Naive thymus-derived CD8-positive, alpha-beta T cell (primary cell): ENCODE measurements at regions of chr11 and their contacts with region 1.

Region 1: DNA sequence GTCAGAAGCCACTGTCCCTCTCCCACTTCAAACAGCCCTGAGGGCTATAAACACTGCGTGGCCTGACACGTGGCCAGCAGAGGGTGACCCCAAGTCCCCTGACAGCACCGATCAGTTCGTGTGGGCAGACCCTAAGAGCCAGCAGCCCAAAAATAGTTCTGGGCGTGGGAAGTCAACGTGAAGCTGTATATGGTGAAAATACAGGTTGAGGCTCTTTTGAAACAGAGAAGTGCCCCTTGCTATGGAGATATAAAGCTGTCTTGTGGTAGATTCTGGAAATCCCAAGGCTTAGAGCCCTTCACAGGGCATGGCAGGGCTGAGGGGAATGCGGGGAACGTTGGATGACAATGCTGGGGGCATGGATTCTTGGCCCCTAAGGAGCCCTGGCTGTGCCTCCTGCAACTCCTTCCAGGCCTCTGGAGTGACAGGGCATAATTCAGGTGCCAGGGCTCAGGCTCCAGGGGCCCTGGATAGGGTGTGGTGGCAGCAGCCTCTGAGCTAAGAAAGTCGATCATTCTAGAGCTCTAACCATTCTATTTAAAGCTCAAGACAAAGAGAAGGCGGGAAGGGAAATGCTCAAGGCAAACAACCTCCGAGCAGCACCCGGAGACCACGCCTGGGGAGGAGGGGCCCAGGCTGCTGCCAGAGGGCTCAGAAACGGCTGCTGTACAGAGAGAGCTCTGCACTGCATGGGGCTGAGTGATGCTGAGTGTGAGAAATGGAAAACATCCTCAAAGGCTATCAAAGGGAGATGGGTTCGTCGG is 60.4 kb upstream of the CD5 start:
- DNase-seq: peak; percentile 72 to 95 (median 86)
- ATAC-seq: peak; percentile 98 to 99
- H3K4me3 Mint-ChIP-seq: peak overlapping the region; percentile 67 to 87 (median 78)
- H3K27ac Mint-ChIP-seq: peak overlapping the region; percentile 95 to 99 (median 98)
- H3K4me1 Mint-ChIP-seq: peaks cover 25 to 55% (median 47%) of the 10 kb centered on the region in 4 donors
- H3K27me3 Mint-ChIP-seq: no peaks in the 10 kb centered on the region

Region 2: DNA sequence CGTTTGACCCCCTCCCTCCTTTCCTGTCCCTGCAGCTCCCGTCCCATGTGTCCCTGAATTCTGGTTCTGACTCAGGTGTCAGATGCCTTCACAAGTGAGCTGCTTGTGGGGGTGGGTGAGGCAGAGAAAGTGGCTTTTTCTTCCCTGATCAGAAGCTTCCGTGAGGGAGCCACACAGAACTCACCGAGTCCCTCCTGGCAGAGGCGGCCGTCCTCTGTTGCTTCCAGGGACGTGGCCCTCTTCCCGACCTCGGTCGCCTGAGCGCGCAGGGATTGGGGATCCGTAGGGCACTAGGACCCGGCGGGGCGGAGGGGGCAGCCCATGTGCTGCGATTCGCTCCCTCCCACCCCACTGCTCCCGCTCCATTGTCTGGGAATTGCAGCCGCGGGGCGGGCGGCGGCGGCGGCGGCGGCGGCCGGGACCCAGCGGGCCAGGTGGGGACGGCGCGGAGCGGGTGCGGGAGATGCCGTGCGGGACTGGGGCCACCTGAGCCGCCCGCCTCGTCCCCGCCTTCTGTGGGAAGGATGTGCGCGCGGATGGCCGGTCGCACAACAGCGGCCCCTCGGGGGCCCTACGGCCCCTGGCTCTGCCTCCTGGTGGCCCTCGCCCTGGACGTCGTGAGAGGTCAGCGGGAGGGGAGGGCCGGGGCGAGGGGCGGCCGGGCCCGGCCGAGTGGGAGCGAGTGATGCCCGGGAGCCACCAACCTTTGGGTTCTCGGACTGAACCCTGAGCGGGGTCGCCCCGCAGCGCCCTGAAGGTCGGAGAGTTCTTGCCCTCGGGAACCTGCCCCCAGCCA is 117.6 kb before region 1 on chr11 and contains the start of gene TMEM132A:
- POLR2A ChIA-PET with region 1: no interaction called
- DNase-seq: peak in 3 of 10 donors; percentile 8 to 24 (median 22)
- ATAC-seq: peak; percentile 43 to 71
- H3K4me3 Mint-ChIP-seq: peak within 1 kb of the TSS; percentile 59 to 81 (median 72)
- H3K27ac Mint-ChIP-seq: peak within 1 kb of the TSS in 3 of 10 donors; percentile 25 to 29 (median 27)
- H3K4me1 Mint-ChIP-seq: peaks cover 13 to 20% (median 17%) of the 10 kb centered on the region in 4 donors
- H3K27me3 Mint-ChIP-seq: peaks cover 0 to 20% (median 9%) of the 10 kb centered on the region in 5 donors
- polyA plus RNA-seq, gene TMEM132A: not detected

Region 3: GRCh38 chr11:60978546-60979380 is 63.2 kb before region 1 on chr11:
- POLR2A ChIA-PET with region 1: interaction called, 18 read pairs
- DNase-seq: peak in 1 of 10 donors; percentile 40
- ATAC-seq: peak; percentile 39 to 45
- H3K4me3 Mint-ChIP-seq: peak overlapping the region; percentile 57 to 95 (median 81)
- H3K27ac Mint-ChIP-seq: peak overlapping the region; percentile 81 to 99 (median 94)
- H3K4me1 Mint-ChIP-seq: peaks cover 36 to 93% (median 89%) of the 10 kb centered on the region in 4 donors
- H3K27me3 Mint-ChIP-seq: no peaks in the 10 kb centered on the region

Region 4: DNA sequence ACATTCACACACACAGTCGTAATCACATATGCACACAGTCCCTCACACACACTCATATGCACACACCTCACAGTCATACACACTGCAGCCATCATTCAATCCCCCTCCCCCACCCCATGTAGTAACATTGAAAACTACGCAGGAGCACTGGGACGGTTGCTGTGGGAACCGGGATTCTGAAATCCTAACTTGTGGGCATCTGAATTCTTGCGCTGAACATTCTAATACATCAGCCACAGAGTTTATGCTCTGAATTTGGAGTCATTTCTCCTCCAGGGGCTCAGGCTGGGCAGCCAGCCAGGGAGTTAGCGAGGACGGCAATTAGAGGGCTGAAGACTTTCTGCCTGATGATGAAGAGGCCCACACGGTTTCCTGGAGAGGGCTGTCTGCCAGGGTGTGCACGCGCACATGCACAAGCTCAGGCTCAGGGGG is 37.7 kb before region 1 on chr11:
- POLR2A ChIA-PET with region 1: interaction called, 13 read pairs
- DNase-seq: peak in 7 of 10 donors; percentile 35 to 74 (median 47)
- ATAC-seq: peak; percentile 64 to 71
- H3K4me3 Mint-ChIP-seq: peak overlapping the region; percentile 60 to 88 (median 78)
- H3K27ac Mint-ChIP-seq: peak overlapping the region; percentile 88 to 98 (median 95)
- H3K4me1 Mint-ChIP-seq: peaks cover 44 to 88% (median 80%) of the 10 kb centered on the region in 4 donors
- H3K27me3 Mint-ChIP-seq: no peaks in the 10 kb centered on the region

Region 5: DNA sequence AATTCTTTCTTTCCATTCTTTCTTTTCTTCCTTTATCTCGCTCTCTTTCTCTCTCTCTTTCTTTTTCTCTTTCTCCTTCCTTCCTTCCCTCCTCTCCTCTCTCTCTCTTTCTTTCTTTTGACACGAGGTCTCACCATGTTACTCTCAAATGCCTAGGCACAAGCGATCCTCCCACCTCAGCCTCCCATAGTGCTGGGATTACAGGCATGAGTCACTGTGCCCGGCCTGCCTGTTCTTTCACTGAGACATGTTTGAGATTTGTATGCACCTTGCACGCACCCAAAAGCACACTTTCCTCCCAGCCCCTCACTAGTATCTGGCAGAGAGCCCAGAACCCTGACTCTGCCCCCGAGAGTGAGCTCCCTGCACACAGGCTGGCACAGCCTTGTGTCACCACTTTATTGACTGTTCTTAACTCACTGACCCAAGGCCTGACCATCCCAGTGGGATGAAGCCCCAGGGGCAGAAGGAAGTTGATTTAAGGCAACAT is 13.6 kb before region 1 on chr11:
- POLR2A ChIA-PET with region 1: interaction called, 122 read pairs
- DNase-seq: peak; percentile 44 to 84 (median 57)
- ATAC-seq: peak; percentile 7 to 31
- H3K4me3 Mint-ChIP-seq: peak overlapping the region; percentile 78 to 98 (median 86)
- H3K27ac Mint-ChIP-seq: peak overlapping the region; percentile 95 to 99 (median 98)
- H3K4me1 Mint-ChIP-seq: peaks cover 41 to 90% (median 80%) of the 10 kb centered on the region in 4 donors
- H3K27me3 Mint-ChIP-seq: no peaks in the 10 kb centered on the region

Region 6: GRCh38 chr11:61061081-61061826 is 19.3 kb after region 1 on chr11:
- POLR2A ChIA-PET with region 1: interaction called, 69 read pairs
- DNase-seq: peak in 9 of 10 donors; percentile 32 to 74 (median 47)
- ATAC-seq: peak; percentile 81 to 86
- H3K4me3 Mint-ChIP-seq: peak overlapping the region; percentile 63 to 90 (median 84)
- H3K27ac Mint-ChIP-seq: peak overlapping the region; percentile 83 to 98 (median 92)
- H3K4me1 Mint-ChIP-seq: peaks cover 26 to 72% (median 59%) of the 10 kb centered on the region in 4 donors
- H3K27me3 Mint-ChIP-seq: no peaks in the 10 kb centered on the region

Region 7: DNA sequence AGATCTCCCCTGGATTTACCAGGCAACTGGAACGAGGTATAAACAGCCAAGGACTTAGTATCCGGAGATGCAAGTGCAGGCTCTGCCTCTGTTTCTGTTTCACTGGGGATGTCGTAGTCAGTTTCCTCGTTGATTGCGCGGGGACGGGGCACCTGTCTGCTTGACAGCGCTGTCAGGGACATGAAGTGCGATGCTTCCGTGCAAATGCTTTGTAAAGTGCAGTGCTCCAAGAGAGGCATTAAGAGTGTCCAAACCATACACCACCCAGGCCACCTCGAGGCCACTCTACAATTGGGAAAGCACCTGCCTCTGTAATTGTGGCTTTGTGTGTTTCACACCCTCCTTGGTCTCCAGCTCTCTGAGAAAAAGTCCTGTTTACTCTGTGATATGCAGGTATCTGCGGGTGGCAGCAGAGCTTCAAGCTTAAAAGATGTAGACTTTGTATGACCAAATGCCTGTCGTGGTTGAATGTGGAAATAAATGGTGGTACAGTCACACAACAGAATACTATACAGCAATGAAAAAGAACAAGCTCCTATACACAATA is 41.7 kb after region 1 on chr11:
- POLR2A ChIA-PET with region 1: interaction called, 85 read pairs
- DNase-seq: peak in 6 of 10 donors; percentile 50 to 82 (median 66)
- ATAC-seq: peak; percentile 53 to 69
- H3K4me3 Mint-ChIP-seq: peak overlapping the region; percentile 70 to 91 (median 80)
- H3K27ac Mint-ChIP-seq: peak overlapping the region; percentile 90 to 99 (median 96)
- H3K4me1 Mint-ChIP-seq: peaks cover 34 to 53% (median 51%) of the 10 kb centered on the region in 4 donors
- H3K27me3 Mint-ChIP-seq: no peaks in the 10 kb centered on the region

Region 8: GRCh38 chr11:61111786-61112517 is 70.0 kb after region 1 on chr11:
- POLR2A ChIA-PET with region 1: interaction called, 20 read pairs
- DNase-seq: peak in 8 of 10 donors; percentile 43 to 76 (median 65)
- ATAC-seq: peak; percentile 74 to 88
- H3K4me3 Mint-ChIP-seq: peak overlapping the region; percentile 70 to 94 (median 85)
- H3K27ac Mint-ChIP-seq: peak overlapping the region in 9 of 10 donors; percentile 89 to 97 (median 94)
- H3K4me1 Mint-ChIP-seq: peaks cover 57 to 100% (median 94%) of the 10 kb centered on the region in 4 donors
- H3K27me3 Mint-ChIP-seq: no peaks in the 10 kb centered on the region